AG04450 (cell line): ENCODE measurements at regions of chr3 and their contacts with region 1.

Region 1: DNA sequence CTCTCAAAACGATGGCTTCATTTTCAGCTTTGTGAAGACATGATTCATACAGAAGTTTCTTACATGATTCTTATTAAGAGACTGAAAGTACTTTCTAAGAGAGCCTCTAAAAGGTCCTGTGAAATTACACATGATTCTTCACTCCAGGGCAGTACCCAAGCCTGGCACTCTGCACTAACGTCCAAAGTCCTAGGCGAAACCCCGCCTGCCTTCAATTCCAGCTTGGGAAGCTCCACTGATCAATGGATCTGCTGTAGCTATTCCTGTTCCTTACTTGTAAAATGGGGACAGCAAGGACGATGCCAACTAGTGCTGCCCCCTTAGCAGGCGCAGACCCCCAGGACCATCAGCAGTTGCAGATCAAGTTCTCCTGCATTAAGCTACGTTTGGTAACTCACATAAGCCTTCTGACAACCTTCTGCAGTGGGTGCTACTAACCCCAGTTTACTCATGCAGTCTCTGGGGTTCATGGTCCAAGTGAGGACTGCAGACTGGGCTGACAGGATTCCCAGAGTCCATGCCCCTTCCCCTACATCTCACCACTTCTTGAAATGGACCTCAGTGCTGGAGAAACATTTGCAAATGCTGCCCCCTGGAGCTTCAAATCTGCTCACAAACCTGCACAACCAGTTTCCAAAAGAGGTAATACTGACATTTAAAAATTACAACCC is 10.6 kb downstream of the CHCHD4 start:
- DNase-seq: no peak
- H3K4me3 ChIP-seq: no peak overlapping the region
- H3K27ac ChIP-seq: no peak overlapping the region
- H3K27me3 ChIP-seq: no peaks in the 10 kb centered on the region
- CTCF ChIP-seq: peak; percentile 37

Region 2: DNA sequence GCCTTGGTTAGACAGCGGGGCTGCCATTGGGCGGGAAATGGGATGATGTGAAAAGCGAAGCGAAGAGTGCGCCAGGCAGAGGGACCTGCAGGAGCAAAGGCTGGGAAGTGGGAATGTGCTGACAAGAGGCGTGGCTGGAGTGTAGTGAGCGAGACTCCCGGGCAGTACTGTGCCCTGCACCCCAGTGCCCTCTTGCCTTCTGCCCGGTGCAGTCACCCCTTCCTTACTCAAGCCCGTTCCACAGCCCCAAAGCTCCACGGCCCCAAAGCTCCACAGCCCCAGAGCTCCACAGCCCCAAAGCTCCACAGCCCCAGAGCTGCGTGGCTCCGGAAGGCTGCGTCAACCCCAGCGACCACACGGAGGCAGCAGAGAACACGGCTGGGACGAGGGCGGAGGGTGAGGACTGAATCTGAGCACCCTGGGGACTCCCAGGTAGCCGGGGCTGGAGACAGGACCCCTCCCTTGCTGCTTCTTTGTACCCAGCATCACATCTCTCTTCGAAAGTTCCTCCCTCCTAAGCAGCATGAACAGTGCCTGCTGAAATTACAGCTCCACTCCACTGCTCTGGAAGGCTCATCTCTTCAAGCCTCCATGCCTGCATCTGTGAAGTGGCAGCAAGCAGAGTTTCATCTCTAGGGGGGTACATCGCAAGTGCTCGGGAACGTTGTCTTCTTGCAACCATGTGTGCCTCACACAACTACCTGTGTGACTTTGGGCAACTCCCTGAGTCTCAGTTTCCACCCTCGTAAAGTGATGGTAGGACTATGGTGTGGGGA is 456.3 kb before region 1 on chr3:
- CTCF ChIA-PET with region 1: interaction called, 11 read pairs
- POLR2A ChIA-PET with region 1: no interaction called
- DNase-seq: no peak
- H3K4me3 ChIP-seq: 0 out of 2 replicates have a peak overlapping the region, but pooled peaks have one; percentile 20
- H3K27ac ChIP-seq: no peak overlapping the region
- H3K27me3 ChIP-seq: peaks cover 10% of the 10 kb centered on the region
- CTCF ChIP-seq: peak; percentile 86

Region 3: GRCh38 chr3:13895155-13896105 is 218.7 kb before region 1 on chr3:
- CTCF ChIA-PET with region 1: interaction called, 16 read pairs
- POLR2A ChIA-PET with region 1: no interaction called
- DNase-seq: peak; percentile 44
- H3K4me3 ChIP-seq: peak overlapping the region; percentile 62
- H3K27ac ChIP-seq: no peak overlapping the region
- H3K27me3 ChIP-seq: peaks cover 13% of the 10 kb centered on the region
- CTCF ChIP-seq: no peak

Region 4: DNA sequence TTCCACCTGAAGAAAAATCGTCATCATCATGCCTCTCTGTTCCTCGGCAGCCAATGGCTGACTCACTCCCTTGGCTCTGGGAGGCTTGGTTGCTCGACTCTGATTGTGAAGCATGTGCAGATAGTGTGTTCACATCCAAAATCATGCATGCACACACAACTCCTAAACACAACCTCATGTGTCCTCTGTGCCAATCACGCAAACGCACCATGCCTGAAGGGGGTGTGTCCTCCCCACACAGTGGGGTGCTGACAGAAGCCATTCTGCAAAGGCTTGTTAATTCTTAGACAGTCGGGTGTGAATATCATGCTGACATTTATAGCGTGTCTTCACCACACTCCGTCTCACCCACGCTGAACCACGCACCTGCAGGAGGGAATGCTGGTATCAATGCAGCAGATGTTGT is 526.1 kb after region 1 on chr3:
- CTCF ChIA-PET with region 1: no interaction called
- POLR2A ChIA-PET with region 1: no interaction called
- DNase-seq: no peak
- H3K4me3 ChIP-seq: no peak overlapping the region
- H3K27ac ChIP-seq: no peak overlapping the region
- H3K27me3 ChIP-seq: peaks cover 8% of the 10 kb centered on the region
- CTCF ChIP-seq: no peak